ENCODE measurements at regions of chr4 and their contacts with region 1.

Region 1: GRCh38 chr4:46491455-46491854 is 101.5 kb upstream of the GABRA2 start:
- DNase-seq: no peak
- H3K4me3 ChIP-seq: no peak overlapping the region
- H3K27ac ChIP-seq: no peak overlapping the region
- H3K4me1 ChIP-seq: no peaks in the 10 kb centered on the region
- H3K27me3 ChIP-seq: no peaks in the 10 kb centered on the region
- CTCF ChIP-seq: no peak
- POLR2A ChIP-seq: no peak

Region 2: DNA sequence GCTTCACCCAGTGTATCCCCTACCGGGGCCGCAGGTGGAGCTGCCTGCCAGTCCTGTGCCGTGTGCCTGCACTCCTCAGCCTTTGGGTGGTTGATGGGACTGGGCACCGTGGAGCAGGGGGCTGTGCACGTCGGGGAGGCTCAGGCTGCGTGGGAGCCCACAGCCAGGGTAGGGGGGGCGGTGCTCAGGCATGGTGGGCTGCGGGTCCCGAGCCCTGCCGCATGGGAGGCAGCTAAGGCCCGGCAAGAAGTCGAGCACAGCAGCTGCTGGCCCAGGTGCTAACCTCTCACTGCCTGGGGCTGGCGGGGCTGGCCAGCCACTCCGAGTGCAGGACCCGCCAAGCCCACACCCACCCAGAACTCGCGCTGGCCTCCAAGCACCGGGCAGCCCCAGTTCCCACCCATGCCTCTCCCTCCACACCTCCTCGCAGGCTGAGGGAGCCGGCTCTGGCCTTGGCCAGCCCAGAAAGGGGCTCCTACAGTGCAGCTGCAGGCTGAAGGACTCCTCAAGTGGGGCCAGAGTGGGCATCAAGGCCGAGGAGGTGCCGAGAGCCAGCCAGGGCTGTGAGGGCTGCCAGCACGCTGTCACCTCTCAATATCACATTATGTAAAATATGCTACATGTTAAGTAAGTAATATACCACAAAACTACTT is 313.4 kb after region 1 on chr4:
- intact Hi-C with region 1: loop called (anchors 5 kb)
- DNase-seq: no peak
- H3K4me3 ChIP-seq: no peak overlapping the region
- H3K27ac ChIP-seq: no peak overlapping the region
- H3K4me1 ChIP-seq: no peaks in the 10 kb centered on the region
- H3K27me3 ChIP-seq: no peaks in the 10 kb centered on the region
- CTCF ChIP-seq: no peak
- POLR2A ChIP-seq: no peak